ENCODE measurements at regions of chr6 and their contacts with region 1.

Region 1: GRCh38 chr6:291697-292505 is at the start of gene DUSP22:
- DNase-seq: peak; percentile 87 to 89
- H3K4me3 ChIP-seq: peak within 1 kb of the TSS; percentile 80
- H3K4me3 Mint-ChIP-seq: peak within 1 kb of the TSS; percentile 80
- H3K27ac Mint-ChIP-seq: peak within 1 kb of the TSS; percentile 70
- H3K4me1 ChIP-seq: no peaks in the 10 kb centered on the region
- H3K4me1 Mint-ChIP-seq: peaks cover 13% of the 10 kb centered on the region
- H3K27me3 ChIP-seq: no peaks in the 10 kb centered on the region
- H3K27me3 Mint-ChIP-seq: peaks cover 10% of the 10 kb centered on the region
- CTCF ChIP-seq: no peak
- total RNA-seq, gene DUSP22: 17.5 and 18.6 TPM in 2 replicates

Region 2: GRCh38 chr6:178119-178518 is 113.8 kb before region 1 on chr6:
- CTCF ChIA-PET with region 1: no interaction called
- POLR2A ChIA-PET with region 1: no interaction called
- intact Hi-C with region 1: no loop called
- DNase-seq: no peak
- H3K4me3 ChIP-seq: no peak overlapping the region
- H3K4me3 Mint-ChIP-seq: no peak overlapping the region
- H3K27ac Mint-ChIP-seq: no peak overlapping the region
- H3K4me1 ChIP-seq: no peaks in the 10 kb centered on the region
- H3K4me1 Mint-ChIP-seq: no peaks in the 10 kb centered on the region
- H3K27me3 ChIP-seq: no peaks in the 10 kb centered on the region
- H3K27me3 Mint-ChIP-seq: peaks cover 7% of the 10 kb centered on the region
- CTCF ChIP-seq: no peak

Region 3: GRCh38 chr6:188821-189655 is 102.9 kb before region 1 on chr6:
- CTCF ChIA-PET with region 1: no interaction called
- POLR2A ChIA-PET with region 1: no interaction called
- intact Hi-C with region 1: loop called (anchors 2 kb)
- DNase-seq: peak; percentile 86 to 90
- H3K4me3 ChIP-seq: no peak overlapping the region
- H3K4me3 Mint-ChIP-seq: no peak overlapping the region
- H3K27ac Mint-ChIP-seq: no peak overlapping the region
- H3K4me1 ChIP-seq: no peaks in the 10 kb centered on the region
- H3K4me1 Mint-ChIP-seq: peaks cover 8% of the 10 kb centered on the region
- H3K27me3 ChIP-seq: no peaks in the 10 kb centered on the region; the same call in 1 of the 2 replicates
- H3K27me3 Mint-ChIP-seq: no peaks in the 10 kb centered on the region
- CTCF ChIP-seq: peak; percentile 87 to 94

Region 4: GRCh38 chr6:305371-306206 is 13.7 kb after region 1 on chr6:
- CTCF ChIA-PET with region 1: no interaction called
- POLR2A ChIA-PET with region 1: no interaction called
- intact Hi-C with region 1: no loop called
- DNase-seq: no peak
- H3K4me3 ChIP-seq: no peak overlapping the region
- H3K4me3 Mint-ChIP-seq: no peak overlapping the region
- H3K27ac Mint-ChIP-seq: no peak overlapping the region
- H3K4me1 ChIP-seq: no peaks in the 10 kb centered on the region
- H3K4me1 Mint-ChIP-seq: no peaks in the 10 kb centered on the region
- H3K27me3 ChIP-seq: no peaks in the 10 kb centered on the region
- H3K27me3 Mint-ChIP-seq: no peaks in the 10 kb centered on the region
- CTCF ChIP-seq: no peak

Region 5: GRCh38 chr6:331622-332531 is 40.0 kb after region 1 on chr6:
- CTCF ChIA-PET with region 1: no interaction called
- POLR2A ChIA-PET with region 1: no interaction called
- intact Hi-C with region 1: loop called (anchors 5 kb)
- DNase-seq: no peak
- H3K4me3 ChIP-seq: no peak overlapping the region
- H3K4me3 Mint-ChIP-seq: no peak overlapping the region
- H3K27ac Mint-ChIP-seq: no peak overlapping the region
- H3K4me1 ChIP-seq: no peaks in the 10 kb centered on the region
- H3K4me1 Mint-ChIP-seq: no peaks in the 10 kb centered on the region
- H3K27me3 ChIP-seq: no peaks in the 10 kb centered on the region
- H3K27me3 Mint-ChIP-seq: peaks cover 3% of the 10 kb centered on the region
- CTCF ChIP-seq: no peak

Region 6: GRCh38 chr6:455006-455585 is 163.2 kb after region 1 on chr6:
- CTCF ChIA-PET with region 1: no interaction called
- POLR2A ChIA-PET with region 1: no interaction called
- intact Hi-C with region 1: no loop called
- DNase-seq: no peak
- H3K4me3 ChIP-seq: no peak overlapping the region
- H3K4me3 Mint-ChIP-seq: no peak overlapping the region
- H3K27ac Mint-ChIP-seq: no peak overlapping the region
- H3K4me1 ChIP-seq: no peaks in the 10 kb centered on the region
- H3K4me1 Mint-ChIP-seq: no peaks in the 10 kb centered on the region
- H3K27me3 ChIP-seq: no peaks in the 10 kb centered on the region; the same call in 1 of the 2 replicates
- H3K27me3 Mint-ChIP-seq: peaks cover 21% of the 10 kb centered on the region
- CTCF ChIP-seq: no peak

Measured in Caco-2 (cell line).